AG04450 (cell line): ENCODE measurements at regions of chr12 and their contacts with region 1.

Region 1: GRCh38 chr12:85866986-85867776 is 6.9 kb upstream of the NTS start:
- DNase-seq: peak; percentile 13
- H3K4me3 ChIP-seq: no peak overlapping the region
- H3K27ac ChIP-seq: no peak overlapping the region
- H3K27me3 ChIP-seq: no peaks in the 10 kb centered on the region
- CTCF ChIP-seq: peak; percentile 86

Region 2: DNA sequence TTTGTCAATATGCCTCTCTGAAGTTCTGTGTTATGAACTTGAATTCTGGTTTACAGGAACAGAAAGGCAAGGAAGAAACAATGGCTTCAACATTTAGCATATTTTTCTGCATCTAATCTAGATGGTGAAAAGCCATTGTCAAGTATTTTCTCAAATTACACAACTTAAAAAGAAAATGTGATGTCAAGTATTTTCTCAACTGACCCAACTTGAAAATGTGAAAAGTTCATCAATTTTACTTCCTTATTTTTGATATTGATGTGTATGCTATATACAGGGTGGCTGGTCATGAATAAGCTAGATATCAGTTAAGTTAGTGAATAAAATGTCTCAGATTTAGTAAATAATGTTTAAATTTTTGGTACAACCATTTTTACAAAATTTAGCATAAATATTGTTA is 390.4 kb before region 1 on chr12:
- CTCF ChIA-PET with region 1: interaction called, 38 read pairs
- POLR2A ChIA-PET with region 1: no interaction called
- DNase-seq: no peak
- H3K4me3 ChIP-seq: no peak overlapping the region
- H3K27ac ChIP-seq: no peak overlapping the region
- H3K27me3 ChIP-seq: no peaks in the 10 kb centered on the region
- CTCF ChIP-seq: no peak

Region 3: GRCh38 chr12:85575120-85576096 is 291.8 kb before region 1 on chr12:
- CTCF ChIA-PET with region 1: interaction called, 116 read pairs
- POLR2A ChIA-PET with region 1: no interaction called
- DNase-seq: peak; percentile 30
- H3K4me3 ChIP-seq: no peak overlapping the region
- H3K27ac ChIP-seq: no peak overlapping the region
- H3K27me3 ChIP-seq: no peaks in the 10 kb centered on the region
- CTCF ChIP-seq: peak; percentile 83

Region 4: GRCh38 chr12:85855305-85855704 is 11.9 kb before region 1 on chr12:
- CTCF ChIA-PET with region 1: interaction called, 27 read pairs
- POLR2A ChIA-PET with region 1: no interaction called
- DNase-seq: no peak
- H3K4me3 ChIP-seq: no peak overlapping the region
- H3K27ac ChIP-seq: no peak overlapping the region
- H3K27me3 ChIP-seq: no peaks in the 10 kb centered on the region
- CTCF ChIP-seq: no peak

Region 5: GRCh38 chr12:85971800-85972199 is 104.6 kb after region 1 on chr12:
- CTCF ChIA-PET with region 1: no interaction called
- POLR2A ChIA-PET with region 1: no interaction called
- DNase-seq: no peak
- H3K4me3 ChIP-seq: no peak overlapping the region
- H3K27ac ChIP-seq: no peak overlapping the region
- H3K27me3 ChIP-seq: no peaks in the 10 kb centered on the region
- CTCF ChIP-seq: peak; percentile 38